Pancreas (tissue), 10 donors: ENCODE measurements at regions of chr2 and their contacts with region 1.

Region 1: GRCh38 chr2:27715318-27716210 is 51.9 kb downstream of the SLC4A1AP start:
- DNase-seq: no peak
- ATAC-seq: peak in 3 of 4 donors; percentile 59 to 67 (median 61)
- H3K4me3 ChIP-seq: peak overlapping the region in 2 of 4 donors; percentile 26 to 28
- H3K27ac ChIP-seq: no peak overlapping the region
- H3K4me1 ChIP-seq: no peaks in the 10 kb centered on the region
- H3K27me3 ChIP-seq: no peaks in the 10 kb centered on the region
- CTCF ChIP-seq: no peak

Region 2: GRCh38 chr2:27509326-27509725 is 206.2 kb before region 1 on chr2:
- intact Hi-C with region 1: no loop called
- DNase-seq: no peak
- ATAC-seq: no peak
- H3K4me3 ChIP-seq: no peak overlapping the region
- H3K27ac ChIP-seq: no peak overlapping the region
- H3K4me1 ChIP-seq: no peaks in the 10 kb centered on the region
- H3K27me3 ChIP-seq: no peaks in the 10 kb centered on the region
- CTCF ChIP-seq: no peak

Region 3: GRCh38 chr2:28406276-28407096 is 690.9 kb after region 1 on chr2:
- intact Hi-C with region 1: loop called in 1 of 3 experiments (anchors 10 kb)
- DNase-seq: peak in 2 of 6 donors; percentile 12 to 34
- ATAC-seq: peak in 3 of 4 donors; percentile 22 to 54 (median 52)
- H3K4me3 ChIP-seq: no peak overlapping the region
- H3K27ac ChIP-seq: peak overlapping the region in 1 of 4 donors; percentile 36
- H3K4me1 ChIP-seq: peaks cover 0 to 2% (median 0%) of the 10 kb centered on the region in 3 donors
- H3K27me3 ChIP-seq: no peaks in the 10 kb centered on the region
- CTCF ChIP-seq: no peak

Region 4: GRCh38 chr2:28452534-28453081 is 737.0 kb after region 1 on chr2:
- intact Hi-C with region 1: loop called in 1 of 3 experiments (anchors 10 kb)
- DNase-seq: peak; percentile 58 to 93 (median 77)
- ATAC-seq: peak; percentile 88 to 94 (median 94)
- H3K4me3 ChIP-seq: no peak overlapping the region
- H3K27ac ChIP-seq: no peak overlapping the region
- H3K4me1 ChIP-seq: no peaks in the 10 kb centered on the region
- H3K27me3 ChIP-seq: no peaks in the 10 kb centered on the region
- CTCF ChIP-seq: peak; percentile 78 to 92 (median 88)